ENCODE measurements at regions of chr16 and their contacts with region 1.

Region 1: DNA sequence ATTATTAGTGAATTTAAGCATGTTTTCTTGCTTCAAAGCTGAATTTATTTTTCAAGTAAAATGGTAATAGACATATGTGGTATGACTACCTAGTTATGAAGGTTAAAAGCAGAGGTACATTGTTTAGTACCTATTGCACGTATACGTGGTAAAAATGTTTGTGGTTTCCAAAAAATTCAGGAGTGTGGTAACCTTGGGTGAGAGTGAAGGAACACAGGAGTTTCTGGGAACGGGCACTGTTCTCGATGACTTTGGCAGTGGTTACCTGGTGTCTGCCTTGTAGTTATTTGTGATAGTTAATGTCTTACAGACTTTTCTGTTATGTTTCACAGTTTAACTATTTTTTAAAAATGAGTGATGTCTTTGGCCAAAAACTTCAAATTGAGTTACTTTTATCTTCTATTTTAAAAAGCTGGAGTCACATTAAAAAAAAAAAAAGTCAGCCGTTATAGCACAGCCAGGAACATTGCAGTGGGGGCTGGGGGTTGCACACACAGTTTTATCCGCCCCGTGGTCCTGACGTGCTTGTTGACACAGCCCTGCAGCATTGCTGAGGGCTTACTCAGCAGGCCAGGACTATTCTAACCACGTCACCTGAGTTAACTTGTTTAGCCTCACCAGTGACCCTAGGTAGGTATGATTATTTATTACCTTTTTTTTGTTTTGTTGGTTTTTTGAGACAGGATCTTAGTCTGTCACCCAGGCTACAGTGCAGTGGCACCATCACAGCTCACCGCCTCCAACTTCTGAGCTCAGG is 10.9 kb downstream of the JPT2 start:
- DNase-seq: peak; percentile 92
- H3K4me3 Mint-ChIP-seq: peak overlapping the region; percentile 56
- H3K27ac Mint-ChIP-seq: peak overlapping the region; percentile 91
- H3K4me1 Mint-ChIP-seq: peaks cover 50% of the 10 kb centered on the region
- H3K27me3 Mint-ChIP-seq: no peaks in the 10 kb centered on the region
- CTCF ChIP-seq: no peak

Region 2: DNA sequence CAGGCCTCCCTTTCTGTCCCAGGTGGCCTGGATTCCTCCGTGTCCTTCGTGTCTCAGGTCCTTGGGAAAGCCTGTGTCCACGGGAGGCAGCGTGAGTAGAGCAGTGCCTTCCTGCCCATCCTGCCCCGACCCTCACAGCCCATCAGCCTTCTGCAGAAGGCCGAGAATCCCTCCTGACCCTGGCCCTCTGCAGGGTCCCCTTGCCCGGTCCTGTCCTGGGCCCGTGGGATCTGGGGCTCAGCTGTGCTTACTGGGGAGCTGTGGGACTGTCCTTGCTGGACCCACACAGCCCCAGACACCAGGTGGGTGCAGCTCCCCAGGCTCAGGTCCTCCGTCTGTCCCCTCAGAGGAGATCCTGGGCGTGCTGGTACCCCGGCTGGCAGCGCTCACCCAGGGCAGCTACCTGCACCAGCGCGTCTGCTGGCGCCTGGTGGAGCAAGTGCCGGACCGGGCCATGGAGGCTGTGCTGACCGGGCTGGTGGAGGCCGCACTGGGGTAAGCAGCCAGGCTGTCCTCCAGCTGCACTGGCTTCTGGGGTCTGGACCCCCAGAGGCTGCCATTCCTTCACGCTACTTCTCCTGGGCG is 191.9 kb before region 1 on chr16:
- CTCF ChIA-PET with region 1: no interaction called
- intact Hi-C with region 1: no loop called
- DNase-seq: no peak
- H3K4me3 Mint-ChIP-seq: no peak overlapping the region
- H3K27ac Mint-ChIP-seq: no peak overlapping the region
- H3K4me1 Mint-ChIP-seq: peaks cover 7% of the 10 kb centered on the region
- H3K27me3 Mint-ChIP-seq: no peaks in the 10 kb centered on the region
- CTCF ChIP-seq: no peak

Region 3: DNA sequence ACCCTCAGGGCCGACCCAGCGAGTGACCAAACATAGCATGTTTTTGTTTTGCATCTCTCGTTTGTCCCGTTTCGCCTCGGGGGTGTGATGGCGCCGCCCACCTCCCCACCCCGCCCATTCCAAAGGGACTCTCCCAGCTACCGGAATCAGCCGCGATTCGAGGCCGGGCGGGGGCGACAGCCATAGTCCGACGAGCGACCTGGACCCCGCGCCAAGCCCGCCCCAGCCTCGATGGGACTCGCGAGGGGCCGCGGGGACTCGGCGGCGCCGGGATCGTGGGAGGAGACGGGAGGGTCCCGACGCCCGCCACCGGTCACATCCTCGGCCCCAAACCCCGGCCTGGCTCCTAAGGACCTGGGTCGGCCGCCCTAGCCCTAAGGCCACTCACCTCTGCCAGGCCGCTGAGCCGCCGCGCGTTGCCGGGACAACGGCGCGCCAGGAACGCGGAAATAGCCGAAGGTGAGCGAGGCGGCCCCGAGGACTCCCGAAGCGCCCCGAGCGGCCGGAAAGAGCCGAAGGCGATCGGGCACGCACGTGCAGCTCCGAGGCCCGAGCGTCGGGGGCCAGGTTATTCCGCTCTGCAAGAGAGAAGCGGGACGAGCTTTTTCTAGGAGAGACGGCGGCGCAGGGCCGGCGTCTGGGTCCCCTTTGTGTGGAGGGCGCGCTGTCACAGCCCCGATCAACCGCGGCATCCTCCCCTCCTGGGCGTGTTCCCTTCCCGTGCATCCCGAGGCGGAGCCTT is 78.5 kb before region 1 on chr16:
- CTCF ChIA-PET with region 1: no interaction called
- intact Hi-C with region 1: loop called (anchors 5 kb)
- DNase-seq: peak; percentile 96
- H3K4me3 Mint-ChIP-seq: peak overlapping the region; percentile 93
- H3K27ac Mint-ChIP-seq: peak overlapping the region; percentile 99
- H3K4me1 Mint-ChIP-seq: peaks cover 26% of the 10 kb centered on the region
- H3K27me3 Mint-ChIP-seq: no peaks in the 10 kb centered on the region
- CTCF ChIP-seq: no peak

Region 4: GRCh38 chr16:1656808-1657617 is 32.0 kb before region 1 on chr16:
- CTCF ChIA-PET with region 1: no interaction called
- intact Hi-C with region 1: no loop called
- DNase-seq: no peak
- H3K4me3 Mint-ChIP-seq: no peak overlapping the region
- H3K27ac Mint-ChIP-seq: no peak overlapping the region
- H3K4me1 Mint-ChIP-seq: no peaks in the 10 kb centered on the region
- H3K27me3 Mint-ChIP-seq: no peaks in the 10 kb centered on the region
- CTCF ChIP-seq: no peak

Region 5: DNA sequence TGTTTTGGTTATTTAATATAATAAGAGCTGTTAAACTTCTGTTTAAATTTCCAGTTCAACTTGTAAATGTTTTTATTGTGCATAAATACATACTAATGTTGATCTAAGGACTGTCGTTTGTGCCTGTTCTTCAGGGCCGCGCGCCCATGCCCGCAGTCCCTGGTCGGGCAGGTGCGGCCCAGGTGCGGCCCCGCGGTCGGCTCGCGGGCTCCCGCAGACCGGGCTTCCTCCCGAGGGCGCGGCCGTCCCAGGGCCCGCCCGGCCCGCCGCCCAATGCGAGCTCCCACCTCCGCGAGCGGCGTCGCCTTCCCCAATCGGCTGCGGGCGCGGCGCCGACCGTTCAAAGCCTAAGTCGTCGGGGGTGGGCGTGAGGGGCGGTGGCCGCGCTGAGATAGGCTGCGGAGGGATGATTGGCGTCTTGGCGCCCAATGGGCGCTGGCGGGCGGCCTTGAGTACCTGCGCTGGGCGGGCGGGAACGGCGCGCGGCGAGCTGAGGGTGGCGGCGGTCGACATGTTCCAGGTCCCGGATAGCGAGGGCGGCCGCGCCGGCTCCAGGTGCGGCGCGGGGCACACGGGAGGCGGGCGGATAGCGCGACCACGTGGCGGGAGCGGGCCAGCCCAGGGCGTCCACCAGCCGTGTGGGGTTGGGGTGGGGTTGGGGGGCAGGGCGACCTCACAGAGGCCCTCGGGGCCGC is 11.0 kb before region 1 on chr16 and contains the start of gene JPT2:
- CTCF ChIA-PET with region 1: interaction called, 18 read pairs
- intact Hi-C with region 1: no loop called
- DNase-seq: peak; percentile 99
- H3K4me3 Mint-ChIP-seq: peak within 1 kb of the TSS; percentile 89
- H3K27ac Mint-ChIP-seq: peak within 1 kb of the TSS; percentile 92
- H3K4me1 Mint-ChIP-seq: peaks cover 34% of the 10 kb centered on the region
- H3K27me3 Mint-ChIP-seq: no peaks in the 10 kb centered on the region
- CTCF ChIP-seq: no peak
- total RNA-seq, gene JPT2: 167 and 185 TPM in 2 replicates

Region 6: GRCh38 chr16:1705688-1706385 is 16.9 kb after region 1 on chr16 and contains the start of gene MAPK8IP3:
- CTCF ChIA-PET with region 1: interaction called, 15 read pairs
- intact Hi-C with region 1: no loop called
- DNase-seq: peak; percentile 98
- H3K4me3 Mint-ChIP-seq: peak within 1 kb of the TSS; percentile 90
- H3K27ac Mint-ChIP-seq: peak within 1 kb of the TSS; percentile 97
- H3K4me1 Mint-ChIP-seq: peaks cover 10% of the 10 kb centered on the region
- H3K27me3 Mint-ChIP-seq: no peaks in the 10 kb centered on the region
- CTCF ChIP-seq: peak; percentile 98
- total RNA-seq, gene MAPK8IP3: 104 and 110 TPM in 2 replicates

Measured in Calu3 (cell line).